GM10248 (cell line): ENCODE measurements at regions of chr2 and their contacts with region 1.

Region 1: DNA sequence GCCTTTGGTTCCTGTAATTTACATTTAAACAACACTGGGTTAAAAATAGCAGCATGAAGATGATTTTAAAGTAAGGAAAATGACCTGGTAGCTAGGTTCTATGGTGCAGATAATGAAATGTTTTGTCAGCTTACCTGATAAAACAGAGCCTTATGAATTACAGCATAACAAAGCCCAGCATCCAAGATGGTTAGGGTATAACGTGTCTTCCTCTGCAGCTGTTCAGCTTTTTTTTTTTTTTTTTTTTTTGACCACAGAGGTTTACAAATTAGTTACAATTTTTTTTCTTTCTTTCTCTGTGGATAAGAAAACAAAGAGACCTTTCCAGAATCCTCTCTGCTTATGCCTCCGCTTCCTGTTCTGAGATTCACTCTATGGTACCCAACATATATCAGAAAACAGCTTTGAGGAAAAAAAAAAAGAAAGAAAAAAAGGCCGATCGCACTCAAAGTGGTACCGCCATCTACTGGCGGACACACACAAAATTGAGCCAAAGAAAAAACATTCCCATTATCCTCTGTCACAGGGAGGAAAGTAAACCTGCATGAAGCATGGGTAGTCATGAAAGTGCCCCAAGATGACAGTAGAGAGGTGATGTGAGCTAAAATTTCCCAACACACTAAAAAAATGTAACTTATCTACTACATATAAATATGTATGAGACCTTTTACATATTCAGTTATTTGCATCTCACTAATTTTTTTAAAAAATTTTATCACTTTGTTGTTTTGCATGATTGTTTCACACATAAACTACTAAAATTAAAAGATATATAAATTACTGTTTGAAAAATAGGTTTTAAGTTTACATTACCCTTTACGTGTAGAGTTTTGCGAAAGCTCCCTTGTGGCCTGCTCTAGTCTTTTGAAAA is at the start of gene SCN3A:
- DNase-seq: peak; percentile 4
- CTCF ChIP-seq: peak; percentile 70

Region 2: DNA sequence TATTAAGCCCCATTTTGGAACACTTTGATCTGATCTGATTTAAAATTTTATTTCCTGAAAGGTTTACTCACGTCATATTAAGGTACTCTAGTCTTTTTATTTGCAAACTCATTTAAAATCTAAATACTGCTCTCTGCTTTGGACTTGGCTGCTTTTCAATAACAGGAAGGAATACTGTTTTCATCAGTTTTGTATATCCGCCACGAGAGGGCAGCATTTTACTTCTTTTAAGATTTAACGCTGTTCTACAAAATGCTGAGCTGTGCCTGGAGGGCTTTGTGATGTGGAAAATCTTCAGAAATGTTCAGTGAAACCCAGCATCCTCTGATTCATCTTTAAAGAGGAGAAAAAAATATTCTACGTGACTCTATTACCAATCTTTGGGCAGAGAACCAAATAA is 211.1 kb before region 1 on chr2:
- CTCF ChIA-PET with region 1: interaction called, 15 read pairs
- POLR2A ChIA-PET with region 1: no interaction called
- DNase-seq: peak; percentile 13
- CTCF ChIP-seq: peak; percentile 58

Region 3: GRCh38 chr2:165015052-165015642 is 188.8 kb before region 1 on chr2:
- CTCF ChIA-PET with region 1: interaction called, 89 read pairs
- POLR2A ChIA-PET with region 1: no interaction called
- DNase-seq: peak; percentile 54
- CTCF ChIP-seq: peak; percentile 90

Region 4: GRCh38 chr2:165185633-165186032 is 18.3 kb before region 1 on chr2:
- CTCF ChIA-PET with region 1: interaction called, 10 read pairs
- POLR2A ChIA-PET with region 1: no interaction called
- DNase-seq: no peak
- CTCF ChIP-seq: no peak

Region 5: DNA sequence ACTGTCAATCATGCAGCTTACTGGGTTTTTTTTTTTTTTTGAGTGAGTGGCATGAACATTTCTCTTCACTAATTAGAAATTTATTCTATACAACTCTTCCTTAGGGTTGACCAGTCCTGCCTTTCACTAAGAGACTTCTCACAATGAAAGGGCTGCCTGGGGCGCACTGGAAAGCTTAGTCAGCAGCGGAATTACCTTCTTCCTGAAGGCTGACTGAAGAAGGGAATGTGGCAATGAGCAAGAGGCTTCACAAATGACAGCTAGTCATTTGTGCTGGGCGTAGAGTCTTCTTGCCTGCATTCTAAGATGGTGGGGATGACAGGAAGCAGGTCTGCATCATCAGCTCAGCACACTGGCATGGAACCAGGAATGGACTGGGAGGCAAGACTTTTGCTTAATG is 15.6 kb after region 1 on chr2:
- CTCF ChIA-PET with region 1: interaction called, 29 read pairs
- POLR2A ChIA-PET with region 1: no interaction called
- DNase-seq: no peak
- CTCF ChIP-seq: no peak

Region 6: DNA sequence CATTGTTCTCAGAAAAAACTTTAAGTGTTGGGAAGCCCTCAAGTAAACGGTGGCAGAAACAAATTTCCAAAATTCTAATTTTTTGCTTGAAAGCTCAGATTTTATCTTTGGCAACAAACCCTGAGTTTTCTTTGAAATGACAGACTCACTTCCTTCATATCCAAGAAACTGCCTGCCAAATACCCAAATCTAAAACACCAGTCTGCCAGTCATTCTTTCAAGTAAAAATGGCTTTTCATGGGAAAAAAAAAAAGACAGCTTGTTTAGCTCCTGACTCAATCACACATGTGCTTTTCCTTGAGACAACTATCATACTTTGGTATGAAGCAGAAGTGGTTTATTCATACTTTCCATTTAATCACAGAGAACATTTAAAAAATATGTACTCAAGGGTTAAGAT is 225.0 kb after region 1 on chr2:
- CTCF ChIA-PET with region 1: no interaction called
- POLR2A ChIA-PET with region 1: no interaction called
- DNase-seq: no peak
- CTCF ChIP-seq: no peak

Region 7: DNA sequence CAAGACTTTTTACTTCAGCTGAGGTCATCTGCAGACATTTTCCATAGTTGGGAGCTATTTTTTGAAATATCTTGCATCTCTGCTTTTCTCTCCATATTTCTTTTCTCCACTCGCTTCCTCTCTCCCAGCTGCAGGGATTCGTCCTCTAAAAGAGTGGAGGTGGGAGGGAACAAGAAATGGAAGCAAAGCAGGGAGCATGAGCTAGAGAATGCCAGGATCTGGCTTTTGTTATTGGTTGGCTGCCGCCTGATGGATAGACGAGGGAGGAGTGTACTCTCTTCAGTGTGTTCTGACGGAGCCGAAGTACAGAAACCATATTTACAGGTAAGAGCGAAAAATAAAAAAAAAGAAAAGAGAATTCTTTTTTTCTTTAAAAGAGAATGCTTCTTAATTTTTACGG is 265.5 kb after region 1 on chr2 and contains the start of gene CSRNP3:
- CTCF ChIA-PET with region 1: no interaction called
- POLR2A ChIA-PET with region 1: no interaction called
- DNase-seq: no peak
- CTCF ChIP-seq: no peak